GM12878 (cell line): ENCODE measurements at regions of chr2 and their contacts with region 1.

Region 1: DNA sequence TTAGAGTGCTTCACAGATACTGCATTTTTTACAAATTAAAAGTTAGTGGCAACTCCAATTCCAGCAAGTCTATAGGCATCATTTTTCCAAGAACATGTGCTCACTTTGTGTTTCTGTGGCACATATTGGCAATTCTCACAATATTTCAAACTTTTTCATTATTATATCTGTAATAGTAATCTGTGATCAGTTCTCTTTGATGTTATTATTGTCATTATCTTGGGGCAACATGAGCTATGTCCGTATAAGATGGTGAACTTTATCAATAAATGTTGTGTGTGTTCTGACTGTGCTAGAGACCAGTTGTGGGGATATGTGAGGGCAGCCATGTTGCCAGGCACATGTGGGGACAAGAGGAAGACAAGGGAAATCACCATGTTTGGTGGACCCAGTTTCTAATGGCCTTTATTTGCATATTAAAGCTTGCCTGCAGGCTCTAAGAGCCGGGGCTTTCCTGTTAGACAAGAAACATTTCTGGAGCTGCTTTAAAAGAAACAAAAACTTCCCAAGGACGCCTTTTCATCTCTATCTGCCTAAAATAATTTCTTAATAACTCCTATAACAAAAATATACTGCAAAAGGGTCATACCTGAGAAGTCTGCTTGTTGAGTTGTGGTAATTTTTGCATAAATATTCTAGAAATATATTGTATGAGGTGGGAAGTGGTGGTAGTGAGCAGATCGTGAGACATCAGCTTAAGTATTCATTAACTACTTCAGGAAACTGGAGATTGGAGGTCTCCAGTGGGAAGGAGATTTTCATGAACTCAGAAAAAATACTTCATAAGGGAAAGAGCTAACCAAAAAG is 37.2 kb downstream of the KYNU start:
- DNase-seq: peak; percentile 75
- ATAC-seq: peak; percentile 100
- H3K4me3 ChIP-seq: peak overlapping the region; percentile 37
- H3K27ac ChIP-seq: peak overlapping the region; percentile 85
- H3K4me1 ChIP-seq: peaks cover 13% of the 10 kb centered on the region; the same call in 1 of the 2 replicates
- H3K27me3 ChIP-seq: no peaks in the 10 kb centered on the region
- CTCF ChIP-seq: no peak
- EP300 ChIP-seq: no peak
- POLR2A ChIP-seq: peak; percentile 33; the same call in 1 of the 2 replicates
- RAD21 ChIP-seq: no peak

Region 2: DNA sequence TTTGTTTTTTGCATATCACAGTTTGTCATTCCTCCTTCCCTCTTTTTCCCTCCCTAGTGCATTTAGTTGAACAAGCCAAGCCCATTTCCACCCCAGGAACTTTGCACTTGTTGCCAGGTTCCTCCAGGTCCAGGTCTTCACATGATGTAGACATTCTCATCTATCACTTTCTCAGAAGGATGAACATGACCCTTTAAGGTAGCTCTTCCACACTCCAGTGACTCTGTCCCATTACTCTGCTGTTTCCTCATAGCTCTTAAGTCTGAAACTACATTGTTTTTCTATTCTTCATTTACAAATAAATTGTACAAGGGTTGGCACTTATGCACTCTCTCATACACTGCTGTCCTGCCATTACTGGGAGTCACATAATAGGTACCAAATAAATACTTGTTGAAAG is 31.2 kb before region 1 on chr2:
- CTCF ChIA-PET with region 1: interaction called, 28 read pairs
- POLR2A ChIA-PET with region 1: interaction called, 18 read pairs
- RAD21 ChIA-PET with region 1: interaction called, 38 read pairs
- SMC1A ChIA-PET with region 1: interaction called, 71 read pairs
- in situ Hi-C with region 1: no loop called
- intact Hi-C with region 1: loop called (anchors 2 kb)
- DNase-seq: no peak
- ATAC-seq: peak; percentile 32
- H3K4me3 ChIP-seq: no peak overlapping the region
- H3K27ac ChIP-seq: no peak overlapping the region
- H3K4me1 ChIP-seq: peaks cover 3% of the 10 kb centered on the region
- H3K27me3 ChIP-seq: no peaks in the 10 kb centered on the region
- CTCF ChIP-seq: no peak
- EP300 ChIP-seq: no peak
- POLR2A ChIP-seq: no peak
- RAD21 ChIP-seq: no peak

Region 3: GRCh38 chr2:142897807-142898206 is 16.9 kb before region 1 on chr2:
- CTCF ChIA-PET with region 1: interaction called, 4 read pairs
- POLR2A ChIA-PET with region 1: interaction called, 7 read pairs
- RAD21 ChIA-PET with region 1: interaction called, 16 read pairs
- SMC1A ChIA-PET with region 1: interaction called, 14 read pairs
- in situ Hi-C with region 1: no loop called
- intact Hi-C with region 1: no loop called
- DNase-seq: no peak
- ATAC-seq: no peak
- H3K4me3 ChIP-seq: no peak overlapping the region
- H3K27ac ChIP-seq: no peak overlapping the region
- H3K4me1 ChIP-seq: peaks cover 7% of the 10 kb centered on the region; the same call in 1 of the 2 replicates
- H3K27me3 ChIP-seq: no peaks in the 10 kb centered on the region
- CTCF ChIP-seq: no peak
- EP300 ChIP-seq: no peak
- POLR2A ChIP-seq: no peak
- RAD21 ChIP-seq: no peak

Region 4: GRCh38 chr2:142937347-142937746 is 22.6 kb after region 1 on chr2:
- CTCF ChIA-PET with region 1: interaction called, 7 read pairs
- POLR2A ChIA-PET with region 1: interaction called, 9 read pairs
- RAD21 ChIA-PET with region 1: interaction called, 16 read pairs
- SMC1A ChIA-PET with region 1: interaction called, 28 read pairs
- in situ Hi-C with region 1: no loop called
- intact Hi-C with region 1: no loop called
- DNase-seq: no peak
- ATAC-seq: peak; percentile 22; the same call in 2 of the 3 replicates
- H3K4me3 ChIP-seq: no peak overlapping the region
- H3K27ac ChIP-seq: no peak overlapping the region
- H3K4me1 ChIP-seq: no peaks in the 10 kb centered on the region
- H3K27me3 ChIP-seq: no peaks in the 10 kb centered on the region
- CTCF ChIP-seq: no peak
- EP300 ChIP-seq: no peak
- POLR2A ChIP-seq: no peak
- RAD21 ChIP-seq: no peak

Region 5: GRCh38 chr2:142980561-142981378 is 66.1 kb after region 1 on chr2:
- CTCF ChIA-PET with region 1: interaction called, 7 read pairs
- POLR2A ChIA-PET with region 1: no interaction called
- RAD21 ChIA-PET with region 1: interaction called, 10 read pairs
- SMC1A ChIA-PET with region 1: interaction called, 19 read pairs
- in situ Hi-C with region 1: no loop called
- intact Hi-C with region 1: no loop called
- DNase-seq: no peak
- ATAC-seq: peak; percentile 58
- H3K4me3 ChIP-seq: no peak overlapping the region
- H3K27ac ChIP-seq: no peak overlapping the region
- H3K4me1 ChIP-seq: peaks cover 19% of the 10 kb centered on the region
- H3K27me3 ChIP-seq: no peaks in the 10 kb centered on the region
- CTCF ChIP-seq: peak; percentile 42 to 66 (median 43); a peak in 5 of 6 replicates
- EP300 ChIP-seq: no peak
- POLR2A ChIP-seq: no peak
- RAD21 ChIP-seq: peak; percentile 68

Region 6: GRCh38 chr2:143088388-143088787 is 173.7 kb after region 1 on chr2:
- CTCF ChIA-PET with region 1: no interaction called
- POLR2A ChIA-PET with region 1: no interaction called
- RAD21 ChIA-PET with region 1: no interaction called
- SMC1A ChIA-PET with region 1: no interaction called
- in situ Hi-C with region 1: no loop called
- intact Hi-C with region 1: no loop called
- DNase-seq: no peak
- ATAC-seq: no peak
- H3K4me3 ChIP-seq: no peak overlapping the region
- H3K27ac ChIP-seq: no peak overlapping the region
- H3K4me1 ChIP-seq: no peaks in the 10 kb centered on the region
- H3K27me3 ChIP-seq: no peaks in the 10 kb centered on the region
- CTCF ChIP-seq: no peak
- EP300 ChIP-seq: no peak
- POLR2A ChIP-seq: no peak
- RAD21 ChIP-seq: no peak

Region 7: GRCh38 chr2:143375384-143375880 is 460.7 kb after region 1 on chr2:
- CTCF ChIA-PET with region 1: no interaction called
- POLR2A ChIA-PET with region 1: no interaction called
- RAD21 ChIA-PET with region 1: no interaction called
- SMC1A ChIA-PET with region 1: no interaction called
- in situ Hi-C with region 1: no loop called
- intact Hi-C with region 1: no loop called
- DNase-seq: no peak
- ATAC-seq: no peak
- H3K4me3 ChIP-seq: no peak overlapping the region
- H3K27ac ChIP-seq: no peak overlapping the region
- H3K4me1 ChIP-seq: no peaks in the 10 kb centered on the region
- H3K27me3 ChIP-seq: no peaks in the 10 kb centered on the region
- CTCF ChIP-seq: no peak
- EP300 ChIP-seq: no peak
- POLR2A ChIP-seq: no peak
- RAD21 ChIP-seq: no peak